Thyroid gland (tissue), 4 donors: ENCODE measurements at regions of chr1 and their contacts with region 1.

Region 1: DNA sequence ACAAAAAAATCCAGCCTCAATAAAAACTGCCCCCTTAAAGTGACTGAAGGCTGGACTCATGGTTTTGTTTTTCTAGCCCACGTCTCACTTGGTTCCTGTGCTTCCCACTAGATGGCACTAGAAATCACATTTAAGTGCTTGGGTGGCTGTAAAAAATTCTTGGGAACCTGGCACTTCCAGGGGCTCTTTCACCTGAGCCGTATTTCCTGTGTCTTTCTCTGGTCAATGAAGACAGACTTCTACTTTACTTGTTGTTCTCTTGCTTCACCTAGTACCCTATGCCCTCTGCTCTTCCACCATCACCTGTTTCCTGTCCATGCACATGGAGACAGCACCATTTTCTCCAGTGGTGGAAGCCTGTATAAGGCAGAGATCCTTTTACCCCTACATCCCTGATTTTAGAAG is 20.0 kb downstream of the METTL13 start:
- DNase-seq: peak in 1 of 2 donors; percentile 31
- H3K4me3 ChIP-seq: no peak overlapping the region
- H3K27ac ChIP-seq: no peak overlapping the region
- H3K4me1 ChIP-seq: peaks cover 15 to 17% of the 10 kb centered on the region in 2 donors
- H3K27me3 ChIP-seq: no peaks in the 10 kb centered on the region
- CTCF ChIP-seq: peak; percentile 53 to 89 (median 82)
- POLR2A ChIP-seq: no peak

Region 2: DNA sequence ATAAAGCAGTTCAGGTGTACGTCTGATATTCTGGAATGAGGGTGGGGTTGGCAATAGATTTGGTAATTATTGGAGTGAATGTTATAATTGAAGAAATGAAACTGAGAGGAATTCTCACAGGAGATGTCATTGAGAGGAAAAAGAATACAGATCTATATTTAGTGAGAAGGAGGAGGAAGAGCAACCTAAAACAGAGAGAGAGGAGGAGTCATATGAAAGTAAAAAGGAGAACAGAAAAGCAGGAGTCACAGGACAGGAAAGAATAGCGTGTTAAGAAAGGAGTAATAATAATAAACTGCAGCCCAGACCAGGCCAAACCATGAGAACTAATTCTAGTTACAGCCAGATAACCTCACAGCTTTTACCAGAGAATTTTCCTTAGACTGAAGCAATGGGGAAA is 928.8 kb before region 1 on chr1:
- intact Hi-C with region 1: no loop called
- DNase-seq: no peak
- H3K4me3 ChIP-seq: no peak overlapping the region
- H3K27ac ChIP-seq: peak overlapping the region in 1 of 3 donors; percentile 1
- H3K4me1 ChIP-seq: no peaks in the 10 kb centered on the region
- H3K27me3 ChIP-seq: no peaks in the 10 kb centered on the region
- CTCF ChIP-seq: no peak
- POLR2A ChIP-seq: no peak

Region 3: GRCh38 chr1:171606402-171606941 is 195.0 kb before region 1 on chr1:
- intact Hi-C with region 1: no loop called
- DNase-seq: no peak
- H3K4me3 ChIP-seq: no peak overlapping the region
- H3K27ac ChIP-seq: peak overlapping the region in 1 of 3 donors; percentile 6
- H3K4me1 ChIP-seq: peaks cover 4 to 5% of the 10 kb centered on the region in 2 donors
- H3K27me3 ChIP-seq: no peaks in the 10 kb centered on the region
- CTCF ChIP-seq: no peak
- POLR2A ChIP-seq: no peak

Region 4: GRCh38 chr1:171984850-171985485 is 183.5 kb after region 1 on chr1:
- intact Hi-C with region 1: loop called (anchors 2 kb)
- DNase-seq: no peak
- H3K4me3 ChIP-seq: no peak overlapping the region
- H3K27ac ChIP-seq: no peak overlapping the region
- H3K4me1 ChIP-seq: no peaks in the 10 kb centered on the region
- H3K27me3 ChIP-seq: no peaks in the 10 kb centered on the region
- CTCF ChIP-seq: peak; percentile 43 to 86 (median 80)
- POLR2A ChIP-seq: no peak